Common myeloid progenitor, CD34-positive (primary cell): ENCODE measurements at regions of chr17 and their contacts with region 1.

Region 1: DNA sequence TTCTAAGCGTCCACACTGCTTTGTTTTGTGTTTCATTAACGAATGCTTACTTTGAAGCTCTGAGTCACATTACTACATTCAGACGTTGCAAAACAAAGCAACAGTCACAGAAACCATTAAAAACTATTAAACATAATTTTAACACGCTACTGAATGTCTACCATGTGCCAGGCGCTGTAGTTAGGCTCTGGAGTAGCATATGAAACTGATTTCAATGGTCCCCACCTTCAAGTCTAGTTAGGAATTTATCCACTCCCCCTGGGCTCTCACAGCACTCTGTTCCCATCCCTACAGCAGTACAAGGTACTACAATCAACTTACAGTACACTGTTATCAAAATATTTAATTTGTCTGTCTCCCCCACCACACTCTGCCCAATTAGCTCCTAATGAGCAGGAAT is 631 bp downstream of the UTP6 start:
- DNase-seq: peak in 1 of 3 donors; percentile 37
- H3K4me3 ChIP-seq: peak overlapping the region; percentile 85 to 100 (median 94)
- H3K27ac ChIP-seq: peak overlapping the region; percentile 78 to 85
- H3K4me1 ChIP-seq: peaks cover 6 to 18% (median 12%) of the 10 kb centered on the region in 4 experiments
- H3K27me3 ChIP-seq: no peaks in the 10 kb centered on the region

Region 2: DNA sequence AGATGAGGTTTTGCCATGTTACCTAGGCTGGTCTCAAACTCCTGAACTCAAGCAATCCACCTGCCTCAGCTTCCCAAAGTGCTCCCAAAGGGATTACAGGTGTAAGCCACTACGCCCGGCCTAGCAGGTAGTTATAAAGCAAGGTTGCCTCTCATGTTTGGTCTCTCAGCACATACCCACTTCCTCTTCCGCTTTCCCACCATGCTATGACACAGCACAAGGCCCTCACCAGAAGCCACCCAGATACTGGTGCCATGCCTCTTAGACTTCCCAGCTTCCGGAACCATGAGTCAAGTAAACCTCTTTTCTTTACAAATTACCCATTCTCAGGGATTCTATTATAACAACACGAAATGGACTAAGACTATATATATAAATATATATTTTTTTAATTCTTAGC is 185.4 kb before region 1 on chr17:
- CTCF ChIA-PET with region 1: no interaction called
- POLR2A ChIA-PET with region 1: no interaction called
- DNase-seq: peak; percentile 45 to 86 (median 81)
- H3K4me3 ChIP-seq: no peak overlapping the region
- H3K27ac ChIP-seq: no peak overlapping the region
- H3K4me1 ChIP-seq: peaks cover 0 to 7% (median 3%) of the 10 kb centered on the region in 4 experiments
- H3K27me3 ChIP-seq: no peaks in the 10 kb centered on the region

Region 3: DNA sequence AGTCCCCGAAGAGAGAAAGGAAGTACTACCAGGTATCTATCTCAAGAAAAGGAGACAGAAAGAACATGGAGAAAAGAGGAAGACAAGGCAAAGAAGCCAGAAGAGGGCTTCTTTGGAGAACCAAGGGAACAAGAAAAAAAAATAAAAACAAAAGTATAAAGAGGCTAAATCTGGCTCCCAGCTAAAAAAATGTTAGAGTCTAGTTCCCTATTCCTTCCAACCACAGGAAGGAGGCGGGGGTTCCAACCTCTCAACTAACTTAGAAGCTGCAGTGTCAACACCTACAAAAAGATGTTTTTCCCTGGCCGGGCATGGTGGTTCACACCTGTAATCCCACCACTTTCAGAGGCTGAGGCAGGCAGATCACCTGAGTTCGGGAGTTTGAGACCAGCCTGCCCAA is 12.8 kb before region 1 on chr17:
- CTCF ChIA-PET with region 1: interaction called, 17 read pairs
- POLR2A ChIA-PET with region 1: interaction called, 7 read pairs
- DNase-seq: peak; percentile 74 to 92 (median 92)
- H3K4me3 ChIP-seq: peak overlapping the region in 4 of 7 experiments; percentile 19 to 37 (median 22)
- H3K27ac ChIP-seq: peak overlapping the region; percentile 28 to 54
- H3K4me1 ChIP-seq: peaks cover 4 to 35% (median 26%) of the 10 kb centered on the region in 4 experiments
- H3K27me3 ChIP-seq: no peaks in the 10 kb centered on the region